A549 (cell line): ENCODE measurements at regions of chr18 and their contacts with region 1.

Region 1: GRCh38 chr18:13530879-13531387 is 195.4 kb downstream of the FAM210A start:
- DNase-seq: peak in 1 of 2 experiments; percentile 46
- ATAC-seq: peak; percentile 85 to 93
- H3K4me3 ChIP-seq: no peak overlapping the region
- H3K27ac ChIP-seq: peak overlapping the region; percentile 50 to 55; a peak in 2 of 6 replicates
- H3K4me1 ChIP-seq: no peaks in the 10 kb centered on the region
- CTCF ChIP-seq: peak; percentile 46
- EP300 ChIP-seq: no peak
- POLR2A ChIP-seq: no peak
- RAD21 ChIP-seq: peak; percentile 63 to 73

Region 2: DNA sequence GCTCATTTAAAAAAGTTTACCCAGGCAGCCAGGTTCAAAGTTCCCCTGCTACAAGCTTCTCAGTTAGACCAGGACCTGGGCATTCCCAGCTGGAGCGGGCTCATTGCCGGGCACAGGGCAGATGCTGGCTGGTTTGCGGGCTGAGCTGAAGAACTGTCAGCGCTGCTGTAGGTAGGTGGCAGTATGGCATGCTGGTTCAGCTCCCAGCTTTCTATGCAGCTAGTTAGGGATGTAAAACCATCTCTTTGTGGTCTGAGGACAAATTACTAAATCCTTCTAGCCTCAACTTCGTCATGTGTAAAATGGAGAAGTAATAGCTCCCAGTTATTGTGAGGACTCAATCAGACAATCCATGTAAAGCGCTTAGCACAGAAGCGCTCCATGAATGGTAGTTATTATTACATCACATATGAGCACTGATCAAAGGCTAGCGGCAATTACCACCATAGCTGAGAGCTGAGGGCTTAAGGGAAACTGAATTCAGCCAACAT is 314.8 kb before region 1 on chr18:
- CTCF ChIA-PET with region 1: interaction called, 15 read pairs
- POLR2A ChIA-PET with region 1: no interaction called
- DNase-seq: peak; percentile 56 to 71
- ATAC-seq: peak; percentile 78 to 90; a peak in 5 of 6 replicates
- H3K4me3 ChIP-seq: no peak overlapping the region
- H3K27ac ChIP-seq: no peak overlapping the region
- H3K4me1 ChIP-seq: peaks cover 15% of the 10 kb centered on the region; the same call in 1 of the 3 replicates
- CTCF ChIP-seq: peak; percentile 57
- EP300 ChIP-seq: no peak
- POLR2A ChIP-seq: no peak
- RAD21 ChIP-seq: peak; percentile 71 to 73